ENCODE measurements at regions of chr17 and their contacts with region 1.

Region 1: GRCh38 chr17:9050801-9051401 is 29.6 kb downstream of the NTN1 start:
- DNase-seq: peak; percentile 41 to 59
- H3K4me3 ChIP-seq: no peak overlapping the region
- H3K27ac ChIP-seq: no peak overlapping the region
- H3K4me1 ChIP-seq: peaks cover 10 to 29% (median 21%) of the 10 kb centered on the region in 4 experiments
- H3K27me3 ChIP-seq: peaks cover 3 to 30% (median 29%) of the 10 kb centered on the region in 4 experiments
- CTCF ChIP-seq: no peak
- EP300 ChIP-seq: no peak
- POLR2A ChIP-seq: no peak
- RAD21 ChIP-seq: no peak

Region 2: DNA sequence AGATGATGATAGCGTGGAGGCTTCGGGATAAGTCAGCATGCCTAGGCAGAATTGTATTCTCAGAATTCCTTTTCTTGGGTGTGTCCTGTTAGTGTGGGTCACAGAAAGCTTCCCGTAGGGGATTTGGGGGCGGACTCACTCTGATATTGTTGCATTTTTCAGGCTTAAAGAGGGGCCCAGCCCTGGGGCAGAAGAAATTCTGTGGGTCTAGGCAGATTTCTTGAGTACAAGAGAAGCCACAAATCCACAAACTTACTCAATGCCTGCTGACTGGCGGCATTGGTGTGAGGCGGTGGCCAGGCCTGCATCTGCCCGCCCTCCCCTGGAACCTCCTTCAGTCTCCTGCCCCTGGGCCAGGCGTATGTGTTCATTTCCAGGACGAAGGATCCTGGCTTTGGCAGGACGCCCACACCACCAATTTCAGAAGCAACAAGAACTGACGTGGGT is 323.8 kb before region 1 on chr17:
- CTCF ChIA-PET with region 1: no interaction called
- POLR2A ChIA-PET with region 1: no interaction called
- DNase-seq: no peak
- H3K4me3 ChIP-seq: no peak overlapping the region
- H3K27ac ChIP-seq: no peak overlapping the region
- H3K4me1 ChIP-seq: no peaks in the 10 kb centered on the region
- H3K27me3 ChIP-seq: no peaks in the 10 kb centered on the region
- CTCF ChIP-seq: no peak
- EP300 ChIP-seq: no peak
- POLR2A ChIP-seq: no peak
- RAD21 ChIP-seq: no peak

Region 3: GRCh38 chr17:8924595-8924994 is 126.3 kb before region 1 on chr17:
- CTCF ChIA-PET with region 1: no interaction called
- POLR2A ChIA-PET with region 1: no interaction called
- DNase-seq: no peak
- H3K4me3 ChIP-seq: no peak overlapping the region
- H3K27ac ChIP-seq: no peak overlapping the region
- H3K4me1 ChIP-seq: no peaks in the 10 kb centered on the region
- H3K27me3 ChIP-seq: no peaks in the 10 kb centered on the region
- CTCF ChIP-seq: no peak
- EP300 ChIP-seq: no peak
- POLR2A ChIP-seq: no peak
- RAD21 ChIP-seq: no peak

Region 4: DNA sequence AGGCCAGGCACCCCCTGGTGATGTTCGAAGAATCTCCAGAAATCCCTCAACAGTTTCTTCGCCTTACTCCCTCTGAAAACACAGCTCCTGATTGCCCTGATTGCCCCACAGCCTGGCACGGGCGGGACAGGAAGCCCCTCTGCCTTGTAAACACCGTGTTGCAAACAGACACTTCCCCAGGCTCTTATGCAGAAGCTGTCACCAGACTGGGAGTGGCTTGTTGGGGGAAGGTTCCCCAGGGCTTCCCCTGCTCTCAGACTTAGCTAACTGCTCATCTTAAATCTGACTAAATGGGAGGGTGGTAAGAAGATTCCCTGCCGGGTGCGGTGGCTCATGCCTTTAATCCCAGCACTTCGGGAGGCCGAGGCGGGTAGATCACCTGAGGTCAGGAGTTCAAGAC is 96.6 kb before region 1 on chr17:
- CTCF ChIA-PET with region 1: no interaction called
- POLR2A ChIA-PET with region 1: no interaction called
- DNase-seq: peak in 1 of 2 experiments; percentile 27
- H3K4me3 ChIP-seq: no peak overlapping the region
- H3K27ac ChIP-seq: no peak overlapping the region
- H3K4me1 ChIP-seq: no peaks in the 10 kb centered on the region; a peak in 2 of 7 replicates
- H3K27me3 ChIP-seq: no peaks in the 10 kb centered on the region
- CTCF ChIP-seq: no peak
- EP300 ChIP-seq: no peak
- POLR2A ChIP-seq: no peak
- RAD21 ChIP-seq: no peak

Region 5: DNA sequence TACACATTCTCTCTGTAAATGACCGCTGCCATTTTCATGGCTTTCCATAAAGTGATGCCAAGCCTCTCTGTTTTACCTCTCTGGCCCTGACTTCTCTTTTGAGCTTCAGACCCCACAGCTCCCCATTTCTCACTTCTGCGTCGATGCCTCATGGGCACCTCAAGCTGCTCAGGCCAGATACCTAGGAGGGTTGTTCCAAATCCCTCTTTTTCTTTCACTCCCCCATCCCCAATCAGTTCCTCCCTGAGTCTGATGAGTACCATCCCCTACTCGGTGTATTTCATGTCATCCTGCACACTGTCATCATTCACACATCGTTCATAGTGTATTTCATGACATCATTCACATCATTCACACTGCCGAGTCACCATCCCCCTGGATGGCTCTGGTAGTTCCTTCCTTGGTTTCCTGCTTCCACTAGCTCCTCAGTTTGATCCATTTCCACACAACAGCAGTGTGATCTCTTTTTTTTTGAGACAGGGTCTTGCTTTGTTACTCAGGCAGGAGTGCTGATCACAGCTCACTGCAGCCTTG is 13.5 kb after region 1 on chr17:
- CTCF ChIA-PET with region 1: interaction called, 3 read pairs
- POLR2A ChIA-PET with region 1: interaction called, 12 read pairs
- DNase-seq: no peak
- H3K4me3 ChIP-seq: no peak overlapping the region
- H3K27ac ChIP-seq: no peak overlapping the region
- H3K4me1 ChIP-seq: peaks cover 3 to 9% (median 5%) of the 10 kb centered on the region in 4 experiments; a peak in 4 of 7 replicates
- H3K27me3 ChIP-seq: no peaks in the 10 kb centered on the region
- CTCF ChIP-seq: no peak
- EP300 ChIP-seq: no peak
- POLR2A ChIP-seq: no peak
- RAD21 ChIP-seq: no peak

Region 6: GRCh38 chr17:9200699-9201359 is 149.9 kb after region 1 on chr17:
- CTCF ChIA-PET with region 1: no interaction called
- POLR2A ChIA-PET with region 1: no interaction called
- DNase-seq: no peak
- H3K4me3 ChIP-seq: no peak overlapping the region
- H3K27ac ChIP-seq: no peak overlapping the region
- H3K4me1 ChIP-seq: peaks cover 5 to 12% (median 9%) of the 10 kb centered on the region in 4 experiments
- H3K27me3 ChIP-seq: no peaks in the 10 kb centered on the region; a peak in 1 of 7 replicates
- CTCF ChIP-seq: no peak
- EP300 ChIP-seq: no peak
- POLR2A ChIP-seq: no peak
- RAD21 ChIP-seq: no peak